Caco-2 (cell line): ENCODE measurements at regions of chr10 and their contacts with region 1.

Region 1: GRCh38 chr10:73785221-73785720 is at the start of gene ZSWIM8:
- DNase-seq: peak; percentile 87 to 90
- H3K4me3 ChIP-seq: peak within 1 kb of the TSS; percentile 90
- H3K4me3 Mint-ChIP-seq: peak within 1 kb of the TSS; percentile 82
- H3K27ac Mint-ChIP-seq: peak within 1 kb of the TSS; percentile 77
- H3K4me1 ChIP-seq: no peaks in the 10 kb centered on the region; the same call in 1 of the 2 replicates
- H3K4me1 Mint-ChIP-seq: peaks cover 13% of the 10 kb centered on the region
- H3K27me3 ChIP-seq: no peaks in the 10 kb centered on the region
- H3K27me3 Mint-ChIP-seq: no peaks in the 10 kb centered on the region
- CTCF ChIP-seq: no peak
- total RNA-seq, gene ZSWIM8: 93.2 and 103 TPM in 2 replicates

Region 2: GRCh38 chr10:73743905-73744663 is 41.2 kb before region 1 on chr10 and contains the start of gene SEC24C:
- CTCF ChIA-PET with region 1: no interaction called
- POLR2A ChIA-PET with region 1: interaction called, 10 read pairs
- intact Hi-C with region 1: loop called (anchors 5 kb)
- DNase-seq: peak; percentile 97
- H3K4me3 ChIP-seq: peak within 1 kb of the TSS; percentile 59
- H3K4me3 Mint-ChIP-seq: peak within 1 kb of the TSS; percentile 97
- H3K27ac Mint-ChIP-seq: peak within 1 kb of the TSS; percentile 99
- H3K4me1 ChIP-seq: peaks cover 6% of the 10 kb centered on the region; the same call in 1 of the 2 replicates
- H3K4me1 Mint-ChIP-seq: peaks cover 6% of the 10 kb centered on the region
- H3K27me3 ChIP-seq: no peaks in the 10 kb centered on the region
- H3K27me3 Mint-ChIP-seq: no peaks in the 10 kb centered on the region
- CTCF ChIP-seq: no peak
- total RNA-seq, gene SEC24C: 91.0 and 91.2 TPM in 2 replicates

Region 3: DNA sequence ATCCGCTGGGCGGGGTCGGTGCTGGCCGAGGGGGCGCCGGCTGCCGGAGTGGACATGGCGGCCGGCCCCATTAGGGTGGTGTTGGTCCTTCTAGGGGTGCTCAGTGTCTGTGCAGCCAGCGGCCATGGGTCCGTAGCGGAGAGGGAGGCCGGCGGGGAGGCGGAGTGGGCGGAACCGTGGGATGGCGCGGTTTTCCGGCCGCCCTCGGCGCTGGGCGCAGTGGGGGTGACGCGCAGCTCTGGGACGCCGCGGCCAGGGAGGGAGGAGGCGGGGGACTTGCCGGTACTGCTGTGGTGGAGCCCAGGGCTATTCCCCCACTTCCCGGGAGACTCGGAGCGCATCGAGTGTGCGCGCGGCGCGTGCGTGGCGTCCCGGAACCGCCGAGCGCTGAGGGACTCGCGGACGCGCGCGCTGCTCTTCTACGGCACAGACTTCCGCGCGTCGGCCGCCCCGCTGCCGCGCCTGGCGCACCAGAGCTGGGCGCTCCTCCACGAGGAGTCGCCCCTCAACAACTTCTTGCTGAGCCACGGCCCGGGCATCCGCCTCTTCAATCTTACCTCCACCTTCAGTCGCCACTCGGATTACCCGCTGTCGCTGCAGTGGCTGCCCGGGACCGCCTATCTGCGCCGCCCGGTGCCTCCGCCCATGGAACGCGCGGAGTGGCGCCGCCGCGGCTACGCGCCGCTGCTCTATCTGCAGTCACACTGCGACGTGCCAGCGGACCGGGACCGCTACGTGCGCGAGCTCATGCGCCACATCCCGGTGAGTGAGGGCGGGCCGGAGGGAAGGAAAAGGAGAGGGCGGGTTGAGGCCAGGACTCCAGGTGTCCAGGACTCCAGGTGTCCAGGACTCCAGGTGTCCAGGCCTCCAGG is 12.8 kb before region 1 on chr10:
- CTCF ChIA-PET with region 1: interaction called, 9 read pairs
- POLR2A ChIA-PET with region 1: interaction called, 19 read pairs
- intact Hi-C with region 1: no loop called
- DNase-seq: peak; percentile 84 to 85
- H3K4me3 ChIP-seq: peak overlapping the region; percentile 91
- H3K4me3 Mint-ChIP-seq: peak overlapping the region; percentile 82
- H3K27ac Mint-ChIP-seq: peak overlapping the region; percentile 75
- H3K4me1 ChIP-seq: peaks cover 7% of the 10 kb centered on the region; the same call in 1 of the 2 replicates
- H3K4me1 Mint-ChIP-seq: peaks cover 21% of the 10 kb centered on the region
- H3K27me3 ChIP-seq: no peaks in the 10 kb centered on the region
- H3K27me3 Mint-ChIP-seq: no peaks in the 10 kb centered on the region
- CTCF ChIP-seq: peak in 1 of 2 experiments; percentile 2

Region 4: GRCh38 chr10:73810735-73811465 is 25.6 kb after region 1 on chr10:
- CTCF ChIA-PET with region 1: no interaction called
- POLR2A ChIA-PET with region 1: no interaction called
- intact Hi-C with region 1: loop called (anchors 2 kb)
- DNase-seq: peak in 1 of 2 experiments; percentile 51
- H3K4me3 ChIP-seq: peak overlapping the region; percentile 83
- H3K4me3 Mint-ChIP-seq: peak overlapping the region; percentile 72
- H3K27ac Mint-ChIP-seq: peak overlapping the region; percentile 65
- H3K4me1 ChIP-seq: no peaks in the 10 kb centered on the region
- H3K4me1 Mint-ChIP-seq: no peaks in the 10 kb centered on the region
- H3K27me3 ChIP-seq: no peaks in the 10 kb centered on the region
- H3K27me3 Mint-ChIP-seq: no peaks in the 10 kb centered on the region
- CTCF ChIP-seq: no peak

Region 5: DNA sequence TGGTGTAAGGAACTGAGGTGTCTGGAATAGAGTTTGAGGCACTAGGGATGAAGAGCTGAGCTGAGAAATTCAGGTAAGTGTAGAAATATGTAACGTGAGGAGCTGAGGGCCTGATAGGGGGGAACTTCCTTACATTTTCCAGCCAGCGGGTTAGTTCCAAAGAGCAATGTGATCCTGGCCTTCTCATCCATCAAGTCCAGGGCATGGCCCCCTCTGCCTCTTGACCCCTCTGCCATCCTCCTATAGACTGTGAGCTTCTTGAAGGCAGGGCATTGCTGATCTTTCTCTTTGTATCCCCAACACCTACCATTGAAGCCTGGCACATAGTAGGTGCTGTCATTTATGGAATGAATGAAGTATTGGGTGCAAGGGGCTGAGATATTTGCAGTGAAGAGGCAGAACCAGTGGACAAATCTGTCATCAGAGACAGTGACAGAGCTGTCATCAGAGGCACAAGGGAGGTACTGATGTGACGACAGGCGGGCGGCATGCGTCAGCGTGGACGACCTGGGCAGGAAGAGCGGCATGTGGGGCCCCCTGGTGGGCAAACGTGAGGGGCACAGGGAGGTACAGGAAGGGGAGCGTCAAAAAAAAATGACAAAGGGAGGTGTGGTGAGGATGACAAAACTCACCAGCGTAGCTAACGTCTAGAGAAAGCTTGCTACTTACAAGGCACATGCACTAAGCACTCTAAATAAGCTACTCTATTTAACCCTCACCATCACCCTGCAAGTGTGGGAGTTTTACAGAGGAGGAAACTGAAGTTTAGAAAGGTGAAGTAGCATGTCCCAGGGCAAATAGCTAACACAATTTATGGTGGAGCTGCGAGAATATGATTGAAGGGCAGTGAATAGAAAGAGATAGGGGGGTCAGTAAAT is 94.3 kb after region 1 on chr10:
- CTCF ChIA-PET with region 1: interaction called, 4 read pairs
- POLR2A ChIA-PET with region 1: interaction called, 9 read pairs
- intact Hi-C with region 1: loop called (anchors 10 kb)
- DNase-seq: peak; percentile 83 to 91
- H3K4me3 ChIP-seq: no peak overlapping the region
- H3K4me3 Mint-ChIP-seq: no peak overlapping the region
- H3K27ac Mint-ChIP-seq: no peak overlapping the region
- H3K4me1 ChIP-seq: peaks cover 25% of the 10 kb centered on the region
- H3K4me1 Mint-ChIP-seq: peaks cover 17% of the 10 kb centered on the region
- H3K27me3 ChIP-seq: no peaks in the 10 kb centered on the region
- H3K27me3 Mint-ChIP-seq: no peaks in the 10 kb centered on the region
- CTCF ChIP-seq: peak; percentile 91 to 95

Region 6: DNA sequence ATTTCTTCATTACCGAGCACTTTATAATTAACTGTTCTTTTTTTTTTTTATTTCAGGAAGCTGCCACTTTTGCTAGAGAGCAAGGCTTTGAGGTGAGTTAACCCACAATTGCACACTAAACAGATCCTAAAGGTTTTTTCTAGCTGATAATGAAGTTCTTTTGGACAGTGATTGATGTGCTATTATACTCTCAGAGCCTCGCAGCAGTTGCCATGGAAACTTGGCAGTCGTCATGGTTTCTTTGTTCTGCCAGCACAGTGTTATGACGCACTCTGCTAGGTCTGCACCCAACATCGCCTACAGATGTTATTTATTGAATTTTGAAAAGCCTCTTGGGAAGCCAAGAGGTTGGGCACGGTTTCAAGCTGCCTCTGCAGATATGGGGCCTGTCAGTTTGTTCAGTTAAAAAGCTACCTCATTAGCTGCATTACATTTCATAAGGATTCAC is 804.0 kb after region 1 on chr10:
- CTCF ChIA-PET with region 1: no interaction called
- POLR2A ChIA-PET with region 1: no interaction called
- intact Hi-C with region 1: no loop called
- DNase-seq: no peak
- H3K4me3 ChIP-seq: no peak overlapping the region
- H3K4me3 Mint-ChIP-seq: no peak overlapping the region
- H3K27ac Mint-ChIP-seq: no peak overlapping the region
- H3K4me1 ChIP-seq: peaks cover 11% of the 10 kb centered on the region
- H3K4me1 Mint-ChIP-seq: peaks cover 14% of the 10 kb centered on the region
- H3K27me3 ChIP-seq: no peaks in the 10 kb centered on the region
- H3K27me3 Mint-ChIP-seq: no peaks in the 10 kb centered on the region
- CTCF ChIP-seq: no peak